Mammary epithelial cell (primary cell): ENCODE measurements at regions of chrX and their contacts with region 1.

Region 1: GRCh38 chrX:1094566-1095333 is 117.7 kb downstream of the CRLF2 start:
- DNase-seq: no peak
- H3K4me3 ChIP-seq: no peak overlapping the region
- H3K27ac ChIP-seq: no peak overlapping the region
- H3K4me1 ChIP-seq: no peaks in the 10 kb centered on the region
- H3K27me3 ChIP-seq: no peaks in the 10 kb centered on the region
- CTCF ChIP-seq: no peak

Region 2: DNA sequence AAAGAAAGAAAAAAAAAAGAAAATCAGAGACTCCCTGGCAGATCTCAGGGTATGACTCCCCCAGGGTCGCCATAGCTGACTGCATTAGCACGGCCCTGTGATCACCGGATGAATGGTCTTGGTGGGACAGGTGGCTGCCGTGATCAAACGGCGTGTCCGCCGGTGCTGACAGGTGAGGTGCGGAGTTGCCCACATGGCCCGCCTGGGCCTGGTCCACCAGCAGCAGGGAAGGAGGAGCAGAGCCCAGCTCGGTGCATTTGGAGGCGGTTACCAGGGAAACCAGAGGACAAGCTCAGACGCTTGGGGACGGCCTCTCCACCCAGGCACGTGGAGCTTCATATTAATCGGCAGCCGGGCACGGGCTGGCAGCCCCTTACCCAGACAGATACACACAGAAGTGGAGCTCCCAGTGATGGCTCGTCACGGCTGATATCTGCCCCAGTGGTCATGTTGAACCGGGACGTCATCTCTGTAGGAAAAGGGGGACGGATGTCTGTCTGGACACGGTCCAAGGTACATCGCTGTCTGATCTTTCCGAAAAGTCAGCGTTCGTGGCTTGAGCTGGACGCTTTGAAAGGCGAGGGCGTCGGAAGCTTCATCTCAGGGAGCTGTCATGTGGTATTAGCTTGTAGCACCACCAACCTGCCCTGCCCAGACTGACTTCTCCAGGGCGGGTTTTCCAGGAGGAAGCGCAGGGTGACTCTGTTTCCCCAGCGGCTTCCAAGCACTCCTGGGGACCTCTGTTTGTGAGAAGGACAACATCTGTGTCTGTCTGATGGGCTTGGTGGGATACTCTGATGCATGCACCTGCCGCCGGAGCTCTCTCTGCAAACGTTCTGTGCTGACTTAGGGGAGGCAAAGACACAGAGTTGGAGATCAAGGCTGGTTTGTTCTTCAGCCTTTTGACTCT is 63.0 kb before region 1 on chrX:
- CTCF ChIA-PET with region 1: no interaction called
- dilution Hi-C with region 1: loop called (anchors 5 kb)
- in situ Hi-C with region 1: no loop called
- intact Hi-C with region 1: no loop called
- DNase-seq: no peak
- H3K4me3 ChIP-seq: no peak overlapping the region
- H3K27ac ChIP-seq: no peak overlapping the region
- H3K4me1 ChIP-seq: no peaks in the 10 kb centered on the region
- H3K27me3 ChIP-seq: no peaks in the 10 kb centered on the region
- CTCF ChIP-seq: no peak

Region 3: GRCh38 chrX:1134976-1135375 is 40.2 kb after region 1 on chrX:
- CTCF ChIA-PET with region 1: no interaction called
- dilution Hi-C with region 1: loop called (anchors 5 kb)
- in situ Hi-C with region 1: no loop called
- intact Hi-C with region 1: no loop called
- DNase-seq: no peak
- H3K4me3 ChIP-seq: no peak overlapping the region
- H3K27ac ChIP-seq: no peak overlapping the region
- H3K4me1 ChIP-seq: no peaks in the 10 kb centered on the region
- H3K27me3 ChIP-seq: no peaks in the 10 kb centered on the region
- CTCF ChIP-seq: no peak

Region 4: GRCh38 chrX:2863629-2864028 is 1768.9 kb after region 1 on chrX:
- CTCF ChIA-PET with region 1: no interaction called
- dilution Hi-C with region 1: no loop called
- in situ Hi-C with region 1: no loop called
- intact Hi-C with region 1: no loop called
- DNase-seq: peak; percentile 4
- H3K4me3 ChIP-seq: no peak overlapping the region
- H3K27ac ChIP-seq: no peak overlapping the region
- H3K4me1 ChIP-seq: no peaks in the 10 kb centered on the region
- H3K27me3 ChIP-seq: no peaks in the 10 kb centered on the region
- CTCF ChIP-seq: no peak